Sigmoid colon (tissue), 7 donors: ENCODE measurements at regions of chr7 and their contacts with region 1.

Region 1: GRCh38 chr7:158829342-158830210 is at the start of gene ESYT2:
- DNase-seq: peak; percentile 99
- H3K4me3 ChIP-seq: peak within 1 kb of the TSS; percentile 85 to 98 (median 92)
- H3K27ac ChIP-seq: peak within 1 kb of the TSS; percentile 96 to 100 (median 98)
- H3K4me1 ChIP-seq: peaks cover 0 to 33% (median 31%) of the 10 kb centered on the region in 4 donors
- H3K27me3 ChIP-seq: no peaks in the 10 kb centered on the region
- CTCF ChIP-seq: no peak
- EP300 ChIP-seq: peak in 3 of 4 donors; percentile 7 to 87 (median 86)
- POLR2A ChIP-seq: peak; percentile 95 to 98
- total RNA-seq, gene ESYT2: 105 to 127 (median 119) TPM

Region 2: DNA sequence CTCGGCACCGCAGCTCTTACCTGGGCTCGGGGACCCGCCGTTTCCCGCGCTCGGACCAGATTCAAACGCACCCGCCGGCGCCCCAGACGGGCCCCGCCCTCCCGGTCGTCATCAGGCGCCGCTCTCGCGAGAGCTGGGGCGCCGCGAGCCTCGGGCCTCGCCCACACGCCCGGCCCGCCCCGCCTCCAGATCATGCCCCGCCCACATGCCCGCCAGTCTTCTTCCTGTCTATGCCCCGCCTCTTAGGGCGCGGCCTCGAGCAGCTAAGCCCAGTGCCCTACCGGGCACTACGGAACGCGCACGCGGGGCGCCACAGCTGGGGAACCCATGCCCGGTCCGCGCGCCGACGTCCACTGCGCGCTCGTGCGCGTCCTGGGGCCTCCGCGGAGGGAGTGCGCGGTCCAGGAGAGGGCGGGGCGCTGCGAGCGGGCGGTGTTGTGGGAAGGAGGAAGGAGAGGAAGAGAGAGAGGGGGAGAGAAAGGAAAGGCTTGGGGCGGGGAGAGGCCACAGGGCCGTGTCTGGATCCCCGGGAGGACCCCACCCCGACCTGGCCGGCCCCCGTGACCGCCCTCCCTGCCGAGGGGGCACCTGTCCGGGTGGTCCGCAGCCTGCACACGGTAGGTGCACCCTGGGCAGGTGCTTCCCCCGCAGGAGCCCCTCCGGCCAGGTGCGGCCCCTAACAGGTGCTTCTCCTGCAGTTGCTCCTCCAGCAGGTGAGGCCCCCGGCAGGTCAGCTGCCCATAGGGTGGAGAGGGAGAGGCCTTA is 124.7 kb before region 1 on chr7 and contains the start of gene NCAPG2:
- intact Hi-C with region 1: loop called (anchors 1 kb)
- DNase-seq: peak; percentile 99
- H3K4me3 ChIP-seq: peak within 1 kb of the TSS; percentile 48 to 94 (median 70)
- H3K27ac ChIP-seq: peak within 1 kb of the TSS; percentile 89 to 90 (median 90)
- H3K4me1 ChIP-seq: peaks cover 0 to 18% (median 13%) of the 10 kb centered on the region in 4 donors
- H3K27me3 ChIP-seq: no peaks in the 10 kb centered on the region
- CTCF ChIP-seq: peak; percentile 35 to 59 (median 39)
- EP300 ChIP-seq: no peak
- POLR2A ChIP-seq: peak; percentile 76 to 92
- total RNA-seq, gene NCAPG2: 3.0 to 7.1 (median 5.1) TPM

Region 3: DNA sequence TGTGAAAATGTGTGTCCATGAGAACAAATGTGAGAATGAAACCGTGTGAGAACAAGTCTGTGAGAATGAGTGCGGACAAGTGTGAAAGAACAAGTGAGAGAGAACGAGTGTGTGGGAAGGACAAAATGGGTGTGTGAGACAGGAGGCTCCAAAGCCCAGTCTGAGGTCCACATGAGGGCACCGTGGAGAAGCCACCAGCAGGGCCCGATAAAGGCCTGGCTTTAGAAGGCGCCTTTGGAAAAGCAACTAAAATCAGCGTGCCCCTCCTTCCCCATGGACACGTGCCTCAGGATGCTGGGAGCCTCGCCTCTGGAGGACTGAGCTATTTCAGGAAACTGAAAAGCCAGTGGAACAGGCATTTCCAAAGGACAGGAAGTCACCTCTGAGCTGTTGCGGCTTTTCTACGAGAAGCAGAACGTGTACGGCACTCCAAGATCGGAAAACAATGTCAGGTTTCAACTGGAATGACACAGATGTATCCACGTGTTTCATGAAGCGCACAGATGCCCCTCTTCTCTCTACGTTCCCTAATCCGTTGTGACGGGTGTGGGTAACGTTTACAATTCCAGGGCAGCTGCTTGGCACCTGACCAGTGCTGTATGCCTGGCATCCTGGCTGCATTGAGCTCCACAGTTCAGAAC is 46.7 kb before region 1 on chr7:
- intact Hi-C with region 1: loop called (anchors 1 kb)
- DNase-seq: peak; percentile 92
- H3K4me3 ChIP-seq: peak overlapping the region in 2 of 4 donors; percentile 20 to 23
- H3K27ac ChIP-seq: peak overlapping the region; percentile 84 to 89 (median 87)
- H3K4me1 ChIP-seq: peaks cover 0 to 70% (median 58%) of the 10 kb centered on the region in 4 donors
- H3K27me3 ChIP-seq: no peaks in the 10 kb centered on the region
- CTCF ChIP-seq: peak; percentile 46 to 67 (median 48)
- EP300 ChIP-seq: peak in 1 of 4 donors; percentile 11
- POLR2A ChIP-seq: no peak

Region 4: DNA sequence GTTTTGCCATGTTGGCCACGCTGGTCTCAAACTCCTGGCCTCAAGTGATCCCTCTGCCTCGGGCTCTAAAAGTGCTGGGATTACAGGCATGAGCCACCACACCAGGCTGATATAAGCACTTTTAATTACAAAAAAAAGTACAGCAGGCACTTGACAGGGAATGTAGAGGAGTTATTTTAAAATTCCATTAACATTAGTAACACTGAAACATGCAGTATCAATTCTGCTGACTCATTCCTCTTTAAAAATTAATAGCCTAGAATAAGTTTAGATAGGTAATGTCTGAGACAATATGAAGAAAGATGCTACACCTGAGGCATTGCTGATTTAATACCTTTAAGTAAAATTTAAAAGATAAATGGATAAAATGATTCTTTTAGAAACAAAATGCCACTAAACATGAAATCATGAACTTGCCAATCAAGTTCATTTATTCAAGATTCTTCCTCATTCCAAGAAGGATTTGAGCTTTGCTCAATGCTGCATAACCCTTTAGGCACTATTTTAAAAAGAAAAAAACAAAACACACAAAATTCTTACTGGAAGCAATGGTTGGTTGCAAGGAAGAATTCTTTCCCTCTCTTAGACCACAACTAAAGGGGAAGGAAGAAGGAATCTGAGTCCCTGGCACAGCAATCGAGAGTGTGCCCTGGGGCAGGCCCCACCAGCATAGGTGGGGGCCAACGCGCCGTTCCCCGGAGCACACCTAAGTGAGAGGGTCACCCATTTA is 26.9 kb before region 1 on chr7:
- intact Hi-C with region 1: no loop called
- DNase-seq: no peak
- H3K4me3 ChIP-seq: no peak overlapping the region
- H3K27ac ChIP-seq: peak overlapping the region; percentile 44 to 54 (median 46)
- H3K4me1 ChIP-seq: peaks cover 0 to 52% (median 38%) of the 10 kb centered on the region in 4 donors
- H3K27me3 ChIP-seq: no peaks in the 10 kb centered on the region
- CTCF ChIP-seq: no peak
- EP300 ChIP-seq: no peak
- POLR2A ChIP-seq: no peak

Region 5: GRCh38 chr7:158814637-158815472 is 14.7 kb before region 1 on chr7:
- intact Hi-C with region 1: loop called (anchors 2 kb)
- DNase-seq: no peak
- H3K4me3 ChIP-seq: no peak overlapping the region
- H3K27ac ChIP-seq: peak overlapping the region; percentile 93 to 95 (median 94)
- H3K4me1 ChIP-seq: peaks cover 0 to 94% (median 84%) of the 10 kb centered on the region in 4 donors
- H3K27me3 ChIP-seq: no peaks in the 10 kb centered on the region
- CTCF ChIP-seq: no peak
- EP300 ChIP-seq: no peak
- POLR2A ChIP-seq: no peak

Region 6: GRCh38 chr7:158856883-158857668 is 27.5 kb after region 1 on chr7:
- intact Hi-C with region 1: loop called (anchors 2 kb)
- DNase-seq: no peak
- H3K4me3 ChIP-seq: peak overlapping the region; percentile 69 to 94 (median 78)
- H3K27ac ChIP-seq: peak overlapping the region; percentile 88 to 91 (median 88)
- H3K4me1 ChIP-seq: peaks cover 0 to 23% (median 12%) of the 10 kb centered on the region in 4 donors
- H3K27me3 ChIP-seq: no peaks in the 10 kb centered on the region
- CTCF ChIP-seq: no peak
- EP300 ChIP-seq: no peak
- POLR2A ChIP-seq: no peak

Region 7: GRCh38 chr7:158863611-158864506 is 34.3 kb after region 1 on chr7:
- intact Hi-C with region 1: loop called (anchors 2 kb)
- DNase-seq: peak; percentile 91
- H3K4me3 ChIP-seq: peak overlapping the region; percentile 43 to 65 (median 54)
- H3K27ac ChIP-seq: peak overlapping the region; percentile 83 to 87 (median 86)
- H3K4me1 ChIP-seq: peaks cover 0 to 43% (median 13%) of the 10 kb centered on the region in 4 donors
- H3K27me3 ChIP-seq: no peaks in the 10 kb centered on the region
- CTCF ChIP-seq: no peak
- EP300 ChIP-seq: peak in 1 of 4 donors; percentile 21
- POLR2A ChIP-seq: peak in 1 of 2 donors; percentile 20

Region 8: DNA sequence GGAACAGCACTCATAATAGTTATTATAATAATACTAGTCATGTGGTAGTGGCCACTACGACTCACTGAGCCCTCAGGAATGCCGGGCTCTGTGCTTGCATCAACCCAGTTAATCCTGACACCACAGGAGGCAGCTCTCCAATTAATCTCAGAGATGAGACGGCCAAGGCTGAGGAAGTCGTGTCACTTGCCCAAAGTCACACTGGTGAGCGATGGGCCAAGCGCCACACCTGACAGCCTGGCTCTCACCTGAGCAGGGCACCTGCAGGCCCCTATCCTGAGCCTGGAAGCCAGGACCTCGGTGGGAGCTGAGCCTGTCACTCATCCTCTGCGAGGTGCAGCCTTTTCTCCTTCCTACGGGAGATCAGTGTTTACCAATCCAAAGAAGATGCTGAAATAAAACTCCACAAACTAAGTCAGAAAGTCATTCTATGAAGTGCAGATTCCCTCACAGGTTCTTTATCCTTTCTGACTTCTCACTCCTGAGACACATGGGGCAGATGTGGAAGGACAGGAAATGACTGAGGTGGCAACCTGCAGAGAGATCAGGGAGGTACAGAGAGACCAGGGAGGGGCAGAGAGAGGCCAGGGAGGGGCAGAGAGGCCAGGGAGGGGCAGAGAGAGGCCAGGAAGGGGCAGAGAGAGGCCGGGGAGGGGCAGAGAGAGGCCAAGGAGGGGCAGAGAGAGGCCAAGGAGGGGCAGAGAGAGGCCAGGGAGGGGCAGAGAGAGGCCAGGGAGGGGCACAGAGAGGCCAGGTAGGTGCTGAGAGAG is 276.5 kb after region 1 on chr7:
- intact Hi-C with region 1: no loop called
- DNase-seq: peak; percentile 49
- H3K4me3 ChIP-seq: no peak overlapping the region
- H3K27ac ChIP-seq: peak overlapping the region in 3 of 4 donors; percentile 10 to 47 (median 35)
- H3K4me1 ChIP-seq: peaks cover 0 to 10% (median 2%) of the 10 kb centered on the region in 4 donors
- H3K27me3 ChIP-seq: no peaks in the 10 kb centered on the region
- CTCF ChIP-seq: no peak
- EP300 ChIP-seq: no peak
- POLR2A ChIP-seq: no peak